Gastrocnemius medialis (tissue), 4 donors: ENCODE measurements at regions of chr9 and their contacts with region 1.

Region 1: DNA sequence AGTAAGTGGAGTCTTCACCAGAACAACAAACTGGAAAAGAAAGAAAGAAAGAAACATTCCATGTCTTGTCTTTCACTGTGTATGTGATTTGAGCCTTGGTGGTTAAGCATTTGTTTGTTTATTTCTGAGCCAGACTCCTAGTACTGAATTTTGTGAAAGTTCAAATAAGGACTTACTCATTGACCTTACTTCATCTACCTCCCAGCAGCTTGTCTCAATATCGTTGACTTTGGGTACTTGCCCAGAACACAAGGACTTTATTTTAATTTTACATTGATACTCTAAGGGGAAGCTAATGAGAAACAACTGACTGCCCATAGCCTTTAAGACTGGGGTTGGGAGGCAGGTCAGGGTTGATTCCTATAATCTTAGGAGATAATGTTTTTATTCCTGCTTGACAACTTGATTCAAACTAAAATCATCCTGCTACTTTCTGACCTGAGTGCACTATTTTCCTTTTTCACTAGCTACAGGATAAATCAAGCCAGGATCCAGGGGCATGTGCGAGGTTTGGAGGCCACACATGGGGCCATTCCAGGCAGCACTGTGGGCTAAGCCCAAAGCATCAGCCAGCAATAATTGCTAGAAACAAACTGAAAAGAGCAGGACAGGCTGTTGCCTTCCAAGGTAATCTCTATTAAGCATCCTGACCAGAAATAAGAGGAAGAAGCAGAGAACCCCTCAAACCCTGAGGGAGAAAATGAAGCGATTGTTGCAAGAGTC is 138.9 kb upstream of the RUSC2 start:
- DNase-seq: no peak
- ATAC-seq: no peak
- H3K4me3 ChIP-seq: no peak overlapping the region
- H3K27ac ChIP-seq: peak overlapping the region; percentile 4 to 60 (median 33)
- H3K4me1 ChIP-seq: peaks cover 8 to 18% of the 10 kb centered on the region in 2 donors
- H3K27me3 ChIP-seq: no peaks in the 10 kb centered on the region
- CTCF ChIP-seq: no peak
- POLR2A ChIP-seq: no peak

Region 2: DNA sequence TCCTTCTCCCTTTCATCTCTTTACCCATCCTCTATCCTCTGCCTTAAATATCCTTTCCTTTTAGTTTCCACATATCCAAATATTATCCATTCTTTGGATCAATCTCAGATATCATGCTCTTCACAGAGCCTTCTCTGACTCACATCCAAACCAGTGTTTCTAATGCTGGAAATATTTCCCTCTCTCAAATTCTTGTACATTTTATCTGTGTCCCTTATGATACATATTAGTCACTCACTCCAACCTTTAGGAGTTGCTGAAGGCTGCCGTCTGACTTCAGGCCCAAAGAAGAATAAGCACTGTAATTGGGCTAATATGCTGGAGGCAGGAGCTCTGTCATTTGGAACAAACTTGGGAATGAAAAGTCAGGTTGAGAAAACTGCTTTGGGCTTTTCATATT is 17.4 kb before region 1 on chr9:
- in situ Hi-C with region 1: no loop called
- intact Hi-C with region 1: loop called (anchors 2 kb)
- DNase-seq: no peak
- ATAC-seq: no peak
- H3K4me3 ChIP-seq: no peak overlapping the region
- H3K27ac ChIP-seq: no peak overlapping the region
- H3K4me1 ChIP-seq: peaks cover 0 to 8% of the 10 kb centered on the region in 2 donors
- H3K27me3 ChIP-seq: no peaks in the 10 kb centered on the region
- CTCF ChIP-seq: no peak
- POLR2A ChIP-seq: no peak